Left ventricle myocardium superior (tissue), 1 donor: ENCODE measurements at regions of chr12 and their contacts with region 1.

Region 1: GRCh38 chr12:7066596-7066995 is 6.1 kb downstream of the C1S start:
- DNase-seq: no peak
- ATAC-seq: no peak

Region 2: GRCh38 chr12:7079826-7080125 is 13.2 kb after region 1 on chr12:
- intact Hi-C with region 1: loop called (anchors 2 kb)
- DNase-seq: no peak
- ATAC-seq: peak; percentile 63

Region 3: GRCh38 chr12:7155481-7156034 is 89.0 kb after region 1 on chr12:
- intact Hi-C with region 1: no loop called
- DNase-seq: no peak
- ATAC-seq: no peak